Lower leg skin (tissue), 4 donors: ENCODE measurements at regions of chr2 and their contacts with region 1.

Region 1: GRCh38 chr2:85282914-85283313 is 44.9 kb downstream of the TGOLN2 start:
- DNase-seq: no peak
- H3K4me3 ChIP-seq: no peak overlapping the region
- CTCF ChIP-seq: no peak
- POLR2A ChIP-seq: no peak

Region 2: DNA sequence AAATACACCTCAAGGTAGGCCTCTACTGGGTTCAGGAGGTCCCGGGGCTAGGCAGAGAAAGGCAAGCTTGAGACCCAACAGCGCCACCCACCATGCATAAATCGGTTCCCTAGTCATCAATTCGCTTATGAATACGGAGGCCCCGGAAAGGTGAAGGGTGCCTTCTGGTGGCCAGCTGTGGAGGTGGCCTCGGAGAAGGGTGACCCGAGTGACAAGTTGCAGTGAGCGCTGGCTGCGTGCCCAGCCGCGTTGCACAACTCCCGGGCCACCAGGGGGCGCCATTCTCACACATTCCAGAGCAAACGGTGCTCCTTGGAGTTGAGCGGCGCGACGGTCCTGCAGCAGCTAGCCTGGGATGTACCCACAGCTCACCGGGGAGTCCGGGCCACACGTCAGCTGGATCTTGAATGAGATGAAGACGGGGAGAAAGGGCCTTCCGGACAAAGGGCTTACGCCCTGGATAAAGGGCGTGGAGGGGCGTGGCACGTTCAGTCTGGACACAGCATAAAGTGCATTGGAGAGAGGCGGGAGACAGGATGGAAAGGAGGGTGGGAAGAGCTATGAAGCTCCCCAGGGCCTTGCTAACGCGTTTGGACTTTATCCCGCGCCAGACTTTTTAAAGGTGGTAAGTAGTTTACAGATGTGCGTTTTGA is 357.1 kb before region 1 on chr2:
- intact Hi-C with region 1: loop called (anchors 5 kb)
- DNase-seq: peak; percentile 94 to 100
- H3K4me3 ChIP-seq: no peak overlapping the region
- CTCF ChIP-seq: peak in 1 of 3 donors; percentile 98
- POLR2A ChIP-seq: no peak